ENCODE measurements at regions of chr13 and their contacts with region 1.

Region 1: GRCh38 chr13:95403828-95404522 is 102.7 kb upstream of the ABCC4 start:
- DNase-seq: peak; percentile 81
- H3K4me3 ChIP-seq: peak overlapping the region in 1 of 2 experiments; percentile 42; a peak in 1 of 4 replicates
- H3K27ac ChIP-seq: no peak overlapping the region
- H3K4me1 ChIP-seq: peaks cover 0 to 10% of the 10 kb centered on the region in 2 experiments; a peak in 1 of 4 replicates
- H3K27me3 ChIP-seq: no peaks in the 10 kb centered on the region
- CTCF ChIP-seq: peak; percentile 96
- EP300 ChIP-seq: no peak
- RAD21 ChIP-seq: peak; percentile 100

Region 2: DNA sequence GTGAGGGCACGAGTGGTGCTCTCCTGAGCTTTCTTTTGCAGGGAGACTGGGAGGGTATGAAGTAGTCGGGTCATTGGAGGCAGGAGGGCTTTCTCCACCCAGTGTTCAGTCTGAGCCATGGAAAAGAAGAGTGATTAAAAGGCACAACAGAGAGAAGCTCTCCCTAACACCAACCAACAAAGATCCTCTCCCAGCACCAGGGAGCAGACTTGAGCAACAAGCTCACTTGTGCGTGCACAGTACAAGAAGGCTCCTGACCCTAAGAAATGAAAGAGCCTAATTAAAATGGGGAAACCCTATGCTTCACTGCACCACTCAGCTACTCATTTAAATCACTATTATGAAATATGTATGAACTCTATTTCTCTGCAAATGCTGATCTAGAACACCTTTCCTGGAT is 415.3 kb before region 1 on chr13:
- CTCF ChIA-PET with region 1: no interaction called
- POLR2A ChIA-PET with region 1: no interaction called
- DNase-seq: no peak
- H3K4me3 ChIP-seq: no peak overlapping the region
- H3K27ac ChIP-seq: no peak overlapping the region
- H3K4me1 ChIP-seq: no peaks in the 10 kb centered on the region
- H3K27me3 ChIP-seq: no peaks in the 10 kb centered on the region
- CTCF ChIP-seq: 0 out of 2 replicates have a peak, but pooled peaks have one; percentile 7
- EP300 ChIP-seq: no peak
- RAD21 ChIP-seq: no peak

Region 3: GRCh38 chr13:95191821-95192563 is 212.0 kb before region 1 on chr13:
- CTCF ChIA-PET with region 1: interaction called, 465 read pairs
- POLR2A ChIA-PET with region 1: interaction called, 3 read pairs
- DNase-seq: peak; percentile 77
- H3K4me3 ChIP-seq: no peak overlapping the region; a peak in 1 of 4 replicates
- H3K27ac ChIP-seq: no peak overlapping the region
- H3K4me1 ChIP-seq: no peaks in the 10 kb centered on the region; a peak in 1 of 4 replicates
- H3K27me3 ChIP-seq: no peaks in the 10 kb centered on the region
- CTCF ChIP-seq: peak; percentile 97
- EP300 ChIP-seq: no peak
- RAD21 ChIP-seq: peak; percentile 91

Region 4: DNA sequence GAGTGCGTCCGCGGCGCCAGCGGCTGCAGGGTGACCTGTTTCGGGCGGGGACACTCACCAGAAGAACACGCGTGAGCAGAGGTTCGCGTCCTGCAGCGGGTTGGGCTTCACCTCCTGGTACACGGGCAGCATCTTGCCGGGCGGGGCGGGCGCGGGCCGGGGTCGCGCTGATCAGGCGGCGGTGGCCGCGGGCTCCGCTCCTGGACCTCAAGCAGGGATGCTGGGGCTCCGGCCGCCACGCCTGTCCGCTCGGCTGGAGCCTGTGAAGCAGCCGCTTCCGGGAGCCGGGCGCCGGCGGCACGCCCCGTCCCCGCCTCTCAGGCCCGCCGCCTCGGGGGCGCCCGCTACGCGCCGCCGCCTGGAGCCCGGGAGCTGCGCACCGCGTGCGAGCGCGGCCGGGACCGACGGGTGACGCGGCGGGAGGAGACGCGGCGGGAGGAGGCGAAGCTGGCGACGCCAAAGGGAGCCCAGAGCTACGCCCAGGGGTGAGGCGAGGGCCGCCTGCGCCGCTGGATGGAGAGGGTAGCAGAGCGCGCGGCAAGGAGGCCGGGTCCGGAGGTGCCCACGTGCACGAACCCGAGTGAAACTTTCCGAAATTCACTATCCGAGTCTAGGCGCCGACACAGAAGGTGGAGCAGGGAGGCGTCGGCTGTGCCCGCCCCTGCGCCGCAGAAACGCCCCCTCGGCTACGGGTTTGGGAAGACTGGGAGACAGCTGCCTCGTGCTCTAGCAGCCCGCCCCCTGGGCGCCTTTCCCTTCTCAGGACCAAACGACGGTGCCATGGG is 102.6 kb before region 1 on chr13 and contains the start of gene ABCC4:
- CTCF ChIA-PET with region 1: interaction called, 110 read pairs
- POLR2A ChIA-PET with region 1: interaction called, 3 read pairs
- DNase-seq: peak; percentile 91
- H3K4me3 ChIP-seq: peak within 1 kb of the TSS; percentile 66 to 95
- H3K27ac ChIP-seq: peak within 1 kb of the TSS; percentile 58 to 61
- H3K4me1 ChIP-seq: peaks cover 0 to 6% of the 10 kb centered on the region in 2 experiments; a peak in 1 of 4 replicates
- H3K27me3 ChIP-seq: no peaks in the 10 kb centered on the region
- CTCF ChIP-seq: no peak; the same call in 1 of the 2 replicates
- EP300 ChIP-seq: no peak
- RAD21 ChIP-seq: no peak
- polyA plus RNA-seq, gene ABCC4: 7.8 and 10.3 TPM in 2 replicates

Region 5: DNA sequence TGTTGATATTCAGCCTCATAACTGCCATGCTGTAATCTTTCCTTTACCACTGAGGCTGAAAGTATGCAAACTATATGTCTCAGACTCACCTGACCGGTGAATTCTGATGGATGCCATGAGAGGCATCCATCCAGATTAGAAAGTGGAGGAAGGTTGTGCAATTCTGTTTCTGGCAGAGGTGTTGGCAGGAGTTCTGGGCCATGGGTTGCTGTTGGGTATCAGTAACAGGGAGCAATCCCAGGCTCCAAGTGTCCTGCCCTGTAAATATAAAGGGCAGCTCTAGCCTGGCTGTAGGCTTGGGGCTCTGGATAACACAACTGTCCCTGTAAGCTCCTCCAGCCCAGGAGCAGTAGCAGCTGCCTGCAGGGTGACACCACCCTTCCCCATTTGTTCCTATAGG is 25.4 kb before region 1 on chr13:
- CTCF ChIA-PET with region 1: interaction called, 55 read pairs
- POLR2A ChIA-PET with region 1: no interaction called
- DNase-seq: no peak
- H3K4me3 ChIP-seq: no peak overlapping the region
- H3K27ac ChIP-seq: no peak overlapping the region
- H3K4me1 ChIP-seq: peaks cover 0 to 2% of the 10 kb centered on the region in 2 experiments; a peak in 1 of 4 replicates
- H3K27me3 ChIP-seq: no peaks in the 10 kb centered on the region; the same call in 1 of the 2 replicates
- CTCF ChIP-seq: no peak
- EP300 ChIP-seq: no peak
- RAD21 ChIP-seq: no peak

Region 6: GRCh38 chr13:95420501-95420900 is 16.5 kb after region 1 on chr13:
- CTCF ChIA-PET with region 1: interaction called, 44 read pairs
- POLR2A ChIA-PET with region 1: no interaction called
- DNase-seq: no peak
- H3K4me3 ChIP-seq: no peak overlapping the region
- H3K27ac ChIP-seq: no peak overlapping the region
- H3K4me1 ChIP-seq: no peaks in the 10 kb centered on the region; a peak in 1 of 4 replicates
- H3K27me3 ChIP-seq: no peaks in the 10 kb centered on the region; the same call in 1 of the 2 replicates
- CTCF ChIP-seq: no peak
- EP300 ChIP-seq: no peak
- RAD21 ChIP-seq: no peak

Region 7: GRCh38 chr13:95451656-95452055 is 47.7 kb after region 1 on chr13:
- CTCF ChIA-PET with region 1: interaction called, 10 read pairs
- POLR2A ChIA-PET with region 1: no interaction called
- DNase-seq: no peak
- H3K4me3 ChIP-seq: no peak overlapping the region
- H3K27ac ChIP-seq: no peak overlapping the region
- H3K4me1 ChIP-seq: no peaks in the 10 kb centered on the region; a peak in 1 of 4 replicates
- H3K27me3 ChIP-seq: peaks cover 7% of the 10 kb centered on the region; the same call in 1 of the 2 replicates
- CTCF ChIP-seq: no peak
- EP300 ChIP-seq: no peak
- RAD21 ChIP-seq: no peak

Region 8: GRCh38 chr13:95480131-95480545 is 76.2 kb after region 1 on chr13:
- CTCF ChIA-PET with region 1: interaction called, 63 read pairs
- POLR2A ChIA-PET with region 1: no interaction called
- DNase-seq: no peak
- H3K4me3 ChIP-seq: no peak overlapping the region
- H3K27ac ChIP-seq: no peak overlapping the region
- H3K4me1 ChIP-seq: peaks cover 0 to 11% of the 10 kb centered on the region in 2 experiments; a peak in 1 of 4 replicates
- H3K27me3 ChIP-seq: no peaks in the 10 kb centered on the region
- CTCF ChIP-seq: no peak
- EP300 ChIP-seq: no peak
- RAD21 ChIP-seq: no peak

Region 9: DNA sequence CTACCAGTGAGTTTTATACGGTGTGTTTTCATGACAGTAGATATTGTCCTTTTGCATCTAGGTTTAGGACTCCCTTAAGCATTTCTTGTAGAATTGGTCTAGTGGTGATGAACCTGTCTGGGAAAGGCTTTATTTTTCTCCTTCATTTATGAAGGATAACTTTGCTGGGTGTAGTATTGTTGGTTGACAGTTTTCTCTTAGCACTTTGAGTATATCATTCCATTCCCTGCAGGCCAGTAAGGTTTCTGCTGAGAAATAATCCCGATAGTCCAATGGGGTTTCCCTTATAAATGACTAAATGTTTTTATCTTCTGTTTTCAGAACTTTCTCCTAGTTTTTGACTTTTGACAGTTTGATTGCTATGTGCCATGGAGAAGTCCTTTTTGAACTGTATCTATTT is 330.1 kb after region 1 on chr13:
- CTCF ChIA-PET with region 1: no interaction called
- POLR2A ChIA-PET with region 1: no interaction called
- DNase-seq: no peak
- H3K4me3 ChIP-seq: no peak overlapping the region
- H3K27ac ChIP-seq: no peak overlapping the region
- H3K4me1 ChIP-seq: no peaks in the 10 kb centered on the region
- H3K27me3 ChIP-seq: no peaks in the 10 kb centered on the region
- CTCF ChIP-seq: no peak
- EP300 ChIP-seq: no peak
- RAD21 ChIP-seq: no peak

Measured in SK-N-SH (cell line).